ENCODE measurements at regions of chr7 and their contacts with region 1.

Region 1: GRCh38 chr7:111113263-111114017 is 22.5 kb downstream of the LRRN3 start:
- DNase-seq: no peak
- H3K4me3 Mint-ChIP-seq: no peak overlapping the region
- H3K27ac Mint-ChIP-seq: peak overlapping the region; percentile 84
- H3K4me1 Mint-ChIP-seq: peaks cover 42% of the 10 kb centered on the region
- H3K27me3 Mint-ChIP-seq: no peaks in the 10 kb centered on the region

Region 2: DNA sequence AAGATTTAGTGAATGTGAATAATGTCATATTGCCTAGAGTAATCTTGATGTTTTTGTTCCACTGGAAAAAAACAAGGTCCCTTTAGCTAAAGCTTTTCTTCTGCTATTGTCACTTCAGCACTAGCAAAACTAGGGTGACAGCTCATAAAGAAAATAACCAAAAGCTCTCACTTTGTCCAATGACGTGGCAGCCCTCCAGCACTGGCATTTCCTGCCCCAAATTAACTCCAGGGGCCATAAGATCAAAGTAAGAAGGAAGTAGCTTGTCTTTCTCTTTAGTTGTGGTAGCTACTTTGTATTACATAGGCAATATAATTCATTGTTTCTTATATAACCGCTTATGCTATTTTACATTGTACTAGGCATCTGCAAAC is 24.7 kb after region 1 on chr7:
- CTCF ChIA-PET with region 1: interaction called, 7 read pairs
- intact Hi-C with region 1: loop called (anchors 1 kb)
- DNase-seq: peak; percentile 86
- H3K4me3 Mint-ChIP-seq: peak overlapping the region; percentile 62
- H3K27ac Mint-ChIP-seq: peak overlapping the region; percentile 92
- H3K4me1 Mint-ChIP-seq: peaks cover 32% of the 10 kb centered on the region
- H3K27me3 Mint-ChIP-seq: no peaks in the 10 kb centered on the region

Region 3: DNA sequence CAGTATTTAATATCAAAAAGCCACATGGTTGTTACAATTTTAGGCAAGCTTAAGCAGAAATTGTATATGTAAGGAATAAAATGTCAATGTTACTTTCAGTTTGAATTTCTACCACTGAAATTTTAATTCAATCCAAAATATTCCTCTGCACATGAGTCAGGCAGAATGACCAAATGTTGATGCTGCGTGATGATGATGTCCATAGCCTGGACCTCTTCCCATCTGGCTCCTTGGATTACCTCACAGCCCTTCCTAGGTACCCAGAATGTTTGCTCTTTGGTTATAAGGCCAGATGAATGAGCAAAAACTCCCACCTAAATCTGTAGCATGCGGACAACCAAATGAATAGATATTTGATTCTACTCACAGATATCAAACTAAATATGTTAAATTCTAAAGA is 707.2 kb after region 1 on chr7:
- CTCF ChIA-PET with region 1: no interaction called
- intact Hi-C with region 1: no loop called
- DNase-seq: no peak
- H3K4me3 Mint-ChIP-seq: no peak overlapping the region
- H3K27ac Mint-ChIP-seq: no peak overlapping the region
- H3K4me1 Mint-ChIP-seq: no peaks in the 10 kb centered on the region
- H3K27me3 Mint-ChIP-seq: no peaks in the 10 kb centered on the region

Measured in activated naive CD4-positive, alpha-beta T cell treated with anti-CD3 and anti-CD28 coated beads for 36 hours (primary cell).